Calu3 (cell line): ENCODE measurements at regions of chr9 and their contacts with region 1.

Region 1: GRCh38 chr9:126690431-126691350 is 77.0 kb downstream of the LMX1B start:
- DNase-seq: peak; percentile 73
- H3K4me3 Mint-ChIP-seq: no peak overlapping the region
- H3K27ac Mint-ChIP-seq: no peak overlapping the region
- H3K4me1 Mint-ChIP-seq: no peaks in the 10 kb centered on the region
- H3K27me3 Mint-ChIP-seq: peaks cover 90% of the 10 kb centered on the region
- CTCF ChIP-seq: peak; percentile 51

Region 2: DNA sequence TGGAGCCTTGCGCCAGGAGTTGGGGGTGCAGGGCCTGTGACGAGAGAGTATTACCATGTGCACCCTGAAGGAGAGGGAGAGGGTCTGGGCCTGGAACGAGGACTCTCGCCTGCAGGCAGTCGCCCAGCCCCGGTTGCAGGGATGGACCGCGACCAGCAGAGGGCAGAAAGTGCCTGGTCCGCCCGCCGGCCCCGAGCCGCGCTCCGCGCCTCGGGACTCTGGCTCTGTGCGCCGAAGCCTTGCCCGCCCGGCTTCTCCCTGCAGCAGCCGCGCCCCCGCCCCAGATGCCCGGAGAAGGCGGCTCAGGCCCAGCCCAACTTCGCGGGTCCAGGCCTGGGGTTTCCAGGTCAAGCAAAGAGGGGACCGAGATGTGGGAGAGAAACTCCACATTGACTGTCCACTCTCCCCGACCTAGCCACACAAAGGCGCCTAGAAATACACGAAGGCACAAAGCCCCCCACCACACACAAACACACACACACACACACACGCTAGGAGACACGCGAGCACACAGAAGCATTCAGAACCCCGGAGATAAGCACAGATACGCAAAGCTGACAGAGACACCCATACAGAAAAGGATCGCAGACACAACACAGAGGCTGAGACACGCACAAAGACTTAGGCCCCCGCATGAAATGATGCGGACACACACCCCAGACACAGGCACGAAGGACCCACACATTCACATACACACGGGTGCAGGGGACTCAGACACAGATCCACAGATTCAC is 78.9 kb before region 1 on chr9:
- CTCF ChIA-PET with region 1: interaction called, 3 read pairs
- intact Hi-C with region 1: loop called (anchors 5 kb)
- DNase-seq: peak; percentile 81
- H3K4me3 Mint-ChIP-seq: no peak overlapping the region
- H3K27ac Mint-ChIP-seq: no peak overlapping the region
- H3K4me1 Mint-ChIP-seq: peaks cover 8% of the 10 kb centered on the region
- H3K27me3 Mint-ChIP-seq: peaks cover 52% of the 10 kb centered on the region
- CTCF ChIP-seq: peak; percentile 73

Region 3: GRCh38 chr9:126636983-126637798 is 53.5 kb before region 1 on chr9:
- CTCF ChIA-PET with region 1: no interaction called
- intact Hi-C with region 1: no loop called
- DNase-seq: no peak
- H3K4me3 Mint-ChIP-seq: no peak overlapping the region
- H3K27ac Mint-ChIP-seq: no peak overlapping the region
- H3K4me1 Mint-ChIP-seq: no peaks in the 10 kb centered on the region
- H3K27me3 Mint-ChIP-seq: peaks cover 100% of the 10 kb centered on the region
- CTCF ChIP-seq: no peak

Region 4: GRCh38 chr9:126661521-126662220 is 29.0 kb before region 1 on chr9:
- CTCF ChIA-PET with region 1: interaction called, 22 read pairs
- intact Hi-C with region 1: loop called (anchors 1 kb)
- DNase-seq: peak; percentile 56
- H3K4me3 Mint-ChIP-seq: no peak overlapping the region
- H3K27ac Mint-ChIP-seq: no peak overlapping the region
- H3K4me1 Mint-ChIP-seq: peaks cover 8% of the 10 kb centered on the region
- H3K27me3 Mint-ChIP-seq: peaks cover 18% of the 10 kb centered on the region
- CTCF ChIP-seq: no peak

Region 5: DNA sequence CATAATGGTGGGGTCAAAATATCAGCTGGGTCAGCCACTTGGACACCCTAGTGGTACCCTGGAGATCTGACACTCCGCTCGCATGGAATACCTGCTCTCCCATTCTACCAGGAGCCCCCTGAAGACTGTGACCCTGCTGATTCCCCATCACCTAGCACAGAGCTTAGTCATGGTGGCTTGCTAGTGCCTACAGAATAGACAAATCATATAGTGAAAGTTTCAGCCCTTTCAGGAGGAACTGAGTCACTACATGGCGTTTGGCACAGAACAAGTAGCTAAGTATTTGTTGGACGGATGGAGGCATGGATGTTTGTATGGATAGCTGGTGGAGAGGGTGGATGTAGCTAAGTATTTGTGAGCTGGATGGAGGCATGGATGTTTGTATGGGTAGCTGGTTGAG is 11.7 kb before region 1 on chr9:
- CTCF ChIA-PET with region 1: interaction called, 3 read pairs
- intact Hi-C with region 1: loop called (anchors 1 kb)
- DNase-seq: no peak
- H3K4me3 Mint-ChIP-seq: no peak overlapping the region
- H3K27ac Mint-ChIP-seq: no peak overlapping the region
- H3K4me1 Mint-ChIP-seq: no peaks in the 10 kb centered on the region
- H3K27me3 Mint-ChIP-seq: peaks cover 97% of the 10 kb centered on the region
- CTCF ChIP-seq: no peak

Region 6: GRCh38 chr9:126763130-126763764 is 72.6 kb after region 1 on chr9:
- CTCF ChIA-PET with region 1: no interaction called
- intact Hi-C with region 1: no loop called
- DNase-seq: no peak
- H3K4me3 Mint-ChIP-seq: no peak overlapping the region
- H3K27ac Mint-ChIP-seq: no peak overlapping the region
- H3K4me1 Mint-ChIP-seq: no peaks in the 10 kb centered on the region
- H3K27me3 Mint-ChIP-seq: peaks cover 4% of the 10 kb centered on the region
- CTCF ChIP-seq: no peak